ENCODE measurements at regions of chr6 and their contacts with region 1.

Region 1: DNA sequence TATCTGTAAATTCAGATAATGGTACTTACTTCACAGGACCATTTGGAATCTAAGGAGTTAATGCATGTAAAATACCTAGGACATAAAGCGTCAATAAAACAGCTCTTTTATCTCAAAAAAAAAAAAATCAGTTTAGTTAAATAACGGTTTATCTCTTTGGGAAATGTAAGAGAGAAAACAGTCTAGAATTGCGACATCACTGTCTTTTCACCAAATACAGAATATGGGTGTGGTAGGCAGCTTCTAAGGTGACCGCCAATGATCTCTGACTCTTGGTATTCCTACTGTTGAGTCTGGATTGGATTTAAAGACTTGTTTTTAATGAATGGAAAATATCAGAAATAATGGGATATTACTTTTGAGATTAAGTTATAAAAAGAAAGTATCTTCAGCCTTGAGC is 111.5 kb downstream of the EYS start:
- DNase-seq: no peak

Region 2: DNA sequence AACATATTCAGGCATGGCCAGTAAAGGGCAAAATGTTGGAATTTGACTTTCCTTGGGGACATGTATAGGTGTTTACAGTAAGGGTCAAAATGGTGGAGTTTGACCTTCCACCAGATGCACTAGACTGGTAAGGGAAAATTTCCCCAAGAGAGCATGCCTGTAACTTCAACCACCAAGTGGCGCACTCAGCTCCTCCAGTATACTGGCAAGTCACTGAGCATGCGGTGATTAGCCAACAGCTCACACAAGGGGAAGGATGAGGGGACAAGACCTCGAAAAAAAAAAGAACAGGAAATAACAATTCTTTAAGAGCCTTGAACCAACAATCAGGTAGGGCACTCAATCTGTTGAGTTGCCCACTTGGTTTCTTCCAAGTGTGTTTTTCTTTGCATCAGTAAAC is 29.4 kb before region 1 on chr6:
- CTCF ChIA-PET with region 1: interaction called, 11 read pairs
- POLR2A ChIA-PET with region 1: no interaction called
- DNase-seq: no peak

Region 3: DNA sequence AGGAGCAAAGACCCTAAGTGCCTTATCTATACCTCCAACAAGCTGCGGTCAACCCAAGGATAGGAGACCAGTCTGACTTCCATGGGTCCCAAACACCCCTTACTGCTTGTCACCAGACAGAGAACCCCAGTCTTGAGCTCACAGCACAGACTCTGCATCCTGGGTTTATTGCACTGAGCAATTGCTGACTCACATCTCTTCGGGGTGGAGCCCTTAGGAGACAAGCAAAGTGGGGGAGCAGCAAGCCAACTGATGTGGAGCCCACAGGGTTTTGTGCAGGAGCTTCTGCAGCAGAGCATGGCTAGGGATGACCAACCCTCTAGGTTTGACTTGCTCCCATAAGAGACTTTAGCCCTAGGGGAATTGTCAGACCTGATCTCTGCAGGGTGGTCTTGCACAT is 150.1 kb after region 1 on chr6:
- CTCF ChIA-PET with region 1: no interaction called
- POLR2A ChIA-PET with region 1: no interaction called
- DNase-seq: no peak

Measured in HEK293T (cell line).